ENCODE measurements at regions of chr5 and their contacts with region 1.

Region 1: GRCh38 chr5:57209351-57210040 is 35.6 kb downstream of the GPBP1 start:
- DNase-seq: no peak
- ATAC-seq: no peak
- H3K4me3 ChIP-seq: no peak overlapping the region
- H3K27ac ChIP-seq: no peak overlapping the region
- H3K4me1 ChIP-seq: peaks cover 17% of the 10 kb centered on the region
- H3K27me3 ChIP-seq: no peaks in the 10 kb centered on the region

Region 2: GRCh38 chr5:56909294-56910209 is 299.9 kb before region 1 on chr5 and contains the start of gene SETD9:
- intact Hi-C with region 1: loop called in 1 of 4 experiments (anchors 10 kb)
- DNase-seq: peak; percentile 99 to 100 (median 100)
- ATAC-seq: peak; percentile 97
- H3K4me3 ChIP-seq: peak within 1 kb of the TSS; percentile 72
- H3K27ac ChIP-seq: peak within 1 kb of the TSS; percentile 95
- H3K4me1 ChIP-seq: peaks cover 2% of the 10 kb centered on the region
- H3K27me3 ChIP-seq: no peaks in the 10 kb centered on the region
- total RNA-seq, gene SETD9: 11.6 to 17.0 (median 14.3) TPM

Region 3: GRCh38 chr5:57327561-57328394 is 118.3 kb after region 1 on chr5:
- intact Hi-C with region 1: no loop called
- DNase-seq: no peak
- ATAC-seq: peak in 1 of 2 donors; percentile 57
- H3K4me3 ChIP-seq: no peak overlapping the region
- H3K27ac ChIP-seq: no peak overlapping the region
- H3K4me1 ChIP-seq: no peaks in the 10 kb centered on the region
- H3K27me3 ChIP-seq: no peaks in the 10 kb centered on the region

Region 4: DNA sequence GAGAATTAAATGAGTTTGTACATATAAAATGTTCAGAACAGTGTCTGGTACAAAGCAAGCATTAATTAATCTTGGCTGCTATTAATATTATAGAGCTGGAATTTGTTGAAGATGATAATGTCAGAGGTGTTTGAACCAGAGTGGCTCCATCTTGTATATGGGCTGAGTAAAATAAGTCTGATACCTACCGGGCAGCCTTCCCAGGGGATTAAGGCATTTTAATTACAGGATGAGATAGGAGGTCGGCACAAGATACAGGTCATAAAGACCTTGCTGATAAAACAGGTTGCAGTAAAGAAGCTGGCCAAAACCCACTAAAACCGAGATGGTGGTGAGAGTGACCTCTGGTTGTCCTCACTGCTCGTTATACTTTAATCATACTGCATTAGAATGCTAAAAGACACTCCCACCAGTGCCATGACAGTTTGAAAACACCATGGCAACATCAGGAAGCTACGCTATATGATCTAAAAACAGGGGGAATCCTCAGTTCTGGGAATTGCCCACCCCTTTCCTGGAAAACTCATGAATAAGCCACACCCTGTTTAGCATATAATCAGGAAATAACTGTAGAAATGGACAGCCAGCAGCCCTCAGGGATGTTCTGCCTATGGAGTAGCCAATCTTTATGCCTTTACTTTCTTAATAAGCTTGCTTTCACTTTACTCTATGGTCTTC is 1160.2 kb after region 1 on chr5:
- intact Hi-C with region 1: no loop called
- DNase-seq: no peak
- ATAC-seq: peak in 1 of 2 donors; percentile 52
- H3K4me3 ChIP-seq: no peak overlapping the region
- H3K27ac ChIP-seq: no peak overlapping the region
- H3K4me1 ChIP-seq: peaks cover 2% of the 10 kb centered on the region
- H3K27me3 ChIP-seq: no peaks in the 10 kb centered on the region